PC-3 (cell line): ENCODE measurements at regions of chr20 and their contacts with region 1.

Region 1: DNA sequence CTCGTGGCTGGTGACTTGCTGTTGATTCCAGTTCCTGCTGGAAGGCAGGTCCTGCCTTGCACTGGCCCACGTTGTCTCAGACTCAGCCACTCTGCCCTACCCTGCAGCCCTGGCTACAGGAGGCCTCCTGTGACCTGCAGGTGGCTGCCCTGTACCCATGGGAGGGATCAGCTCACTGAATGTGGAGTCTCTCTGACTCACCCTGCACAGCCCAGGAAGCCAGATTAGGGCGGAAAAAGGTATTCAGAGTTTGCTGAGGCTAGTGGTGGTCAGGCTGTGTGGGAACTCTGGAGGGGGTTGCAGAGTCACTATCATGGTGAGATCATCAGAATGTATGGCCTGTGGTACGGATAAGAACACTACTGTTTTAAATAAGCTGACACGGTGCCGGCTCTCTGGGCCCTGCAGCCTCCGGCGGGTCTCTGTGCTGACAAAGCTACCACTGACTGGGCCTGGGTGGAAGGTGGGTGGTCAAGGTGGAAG is 24.7 kb upstream of the PYGB start:
- DNase-seq: peak; percentile 99
- ATAC-seq: peak; percentile 94
- H3K4me3 ChIP-seq: no peak overlapping the region
- H3K27ac ChIP-seq: peak overlapping the region; percentile 95
- H3K4me1 ChIP-seq: peaks cover 38% of the 10 kb centered on the region
- H3K27me3 ChIP-seq: no peaks in the 10 kb centered on the region
- CTCF ChIP-seq: peak; percentile 73

Region 2: DNA sequence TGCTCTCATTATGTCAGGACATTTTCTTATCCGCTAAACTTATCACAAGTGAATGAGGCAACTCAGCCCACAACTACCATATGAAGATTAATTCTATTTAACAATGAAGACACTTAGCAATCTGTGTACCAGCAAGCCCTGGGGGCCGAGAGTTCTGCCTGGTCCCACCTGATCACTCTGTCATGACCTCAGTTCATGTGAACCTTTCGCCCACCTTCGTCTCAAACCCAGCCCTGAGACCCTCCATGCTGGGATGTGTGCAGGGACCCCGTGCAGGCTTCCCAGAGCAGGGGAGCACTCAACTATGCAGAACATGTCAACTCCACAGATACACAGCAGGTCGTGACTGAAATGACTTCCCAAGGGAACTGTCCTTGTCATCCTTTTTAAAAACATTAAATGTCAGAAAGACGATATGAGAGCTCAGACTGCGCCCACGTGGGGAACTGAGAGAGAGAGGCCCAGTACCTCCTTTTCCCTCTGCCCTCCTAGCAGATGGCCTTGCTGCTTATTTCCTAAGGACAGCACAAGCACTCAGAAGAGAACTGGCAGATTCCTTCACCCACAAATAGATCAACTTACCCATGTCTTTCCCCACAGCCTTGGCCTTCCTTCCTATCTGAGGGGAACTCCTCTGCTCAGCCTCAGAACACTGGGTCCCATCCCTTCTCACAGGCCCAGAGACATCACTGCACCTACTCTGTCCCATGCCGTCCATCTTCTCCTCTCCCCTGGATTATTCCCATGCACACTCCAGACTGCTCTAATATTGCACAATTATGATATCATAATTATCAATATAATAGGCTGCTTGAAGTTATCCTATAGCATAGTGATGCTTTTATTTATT is 155.9 kb after region 1 on chr20:
- CTCF ChIA-PET with region 1: no interaction called
- POLR2A ChIA-PET with region 1: interaction called, 19 read pairs
- intact Hi-C with region 1: no loop called
- DNase-seq: no peak
- ATAC-seq: no peak
- H3K4me3 ChIP-seq: no peak overlapping the region
- H3K27ac ChIP-seq: no peak overlapping the region
- H3K4me1 ChIP-seq: no peaks in the 10 kb centered on the region
- H3K27me3 ChIP-seq: no peaks in the 10 kb centered on the region
- CTCF ChIP-seq: no peak